ENCODE measurements at regions of chr14 and their contacts with region 1.

Region 1: GRCh38 chr14:103104654-103105452 is 10.3 kb downstream of the EXOC3L4 start:
- DNase-seq: peak; percentile 59
- H3K4me3 Mint-ChIP-seq: no peak overlapping the region
- H3K27ac Mint-ChIP-seq: no peak overlapping the region
- H3K4me1 Mint-ChIP-seq: peaks cover 8% of the 10 kb centered on the region
- H3K27me3 Mint-ChIP-seq: peaks cover 13% of the 10 kb centered on the region
- CTCF ChIP-seq: peak; percentile 94

Region 2: GRCh38 chr14:103078093-103078749 is 26.6 kb before region 1 on chr14:
- CTCF ChIA-PET with region 1: interaction called, 19 read pairs
- POLR2A ChIA-PET with region 1: interaction called, 3 read pairs
- intact Hi-C with region 1: no loop called
- DNase-seq: peak; percentile 86
- H3K4me3 Mint-ChIP-seq: no peak overlapping the region
- H3K27ac Mint-ChIP-seq: no peak overlapping the region
- H3K4me1 Mint-ChIP-seq: peaks cover 6% of the 10 kb centered on the region
- H3K27me3 Mint-ChIP-seq: no peaks in the 10 kb centered on the region
- CTCF ChIP-seq: peak; percentile 62

Region 3: GRCh38 chr14:103123634-103124500 is 19.0 kb after region 1 on chr14:
- CTCF ChIA-PET with region 1: interaction called, 50 read pairs
- POLR2A ChIA-PET with region 1: no interaction called
- intact Hi-C with region 1: no loop called
- DNase-seq: no peak
- H3K4me3 Mint-ChIP-seq: peak overlapping the region; percentile 62
- H3K27ac Mint-ChIP-seq: no peak overlapping the region
- H3K4me1 Mint-ChIP-seq: peaks cover 29% of the 10 kb centered on the region
- H3K27me3 Mint-ChIP-seq: no peaks in the 10 kb centered on the region
- CTCF ChIP-seq: peak; percentile 25

Region 4: GRCh38 chr14:103160866-103161391 is 56.1 kb after region 1 on chr14:
- CTCF ChIA-PET with region 1: interaction called, 16 read pairs
- POLR2A ChIA-PET with region 1: no interaction called
- intact Hi-C with region 1: no loop called
- DNase-seq: no peak
- H3K4me3 Mint-ChIP-seq: no peak overlapping the region
- H3K27ac Mint-ChIP-seq: no peak overlapping the region
- H3K4me1 Mint-ChIP-seq: no peaks in the 10 kb centered on the region
- H3K27me3 Mint-ChIP-seq: no peaks in the 10 kb centered on the region
- CTCF ChIP-seq: no peak

Region 5: DNA sequence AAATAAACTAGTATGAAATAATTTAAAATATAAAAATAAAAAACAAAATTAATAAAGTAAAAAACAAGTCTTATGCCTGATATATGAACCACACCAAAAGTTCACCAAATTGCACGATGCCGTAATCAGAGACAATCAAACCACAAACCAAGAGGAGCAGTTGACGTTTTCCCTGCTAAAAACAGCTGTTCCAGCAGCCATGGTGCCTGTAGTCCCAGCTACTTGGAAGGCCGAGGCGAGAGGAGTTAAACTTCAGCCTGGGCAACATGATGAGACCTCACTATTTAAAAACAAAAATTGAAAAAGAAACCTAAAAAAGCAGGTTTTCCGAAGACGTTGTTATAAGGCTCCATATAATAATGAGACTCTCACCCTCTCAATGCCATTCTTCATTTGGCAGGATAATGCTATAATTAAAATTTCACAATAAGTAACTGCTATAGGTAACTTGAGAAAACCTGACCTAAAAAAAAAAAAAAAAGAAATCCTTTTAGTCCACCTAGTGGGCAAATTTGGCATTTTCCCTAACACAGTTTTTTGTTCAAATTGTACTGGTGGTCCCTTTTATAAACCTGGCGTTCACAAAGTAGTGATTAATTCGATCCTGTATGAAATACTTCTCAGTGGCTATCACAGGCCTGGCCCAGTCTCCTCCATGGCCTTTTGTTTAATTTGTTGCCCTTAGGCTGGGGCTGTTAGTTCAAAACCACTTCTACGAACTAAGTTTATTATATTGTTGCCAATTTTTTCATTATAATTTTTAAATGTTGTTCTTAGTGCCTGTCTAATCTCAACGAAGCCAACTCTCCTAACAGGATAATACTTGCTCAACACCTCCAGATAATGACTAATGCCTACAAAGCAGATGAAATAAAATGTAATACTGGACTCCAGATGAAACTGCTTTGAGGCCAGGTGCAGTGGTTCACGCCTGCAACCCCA is 80.5 kb after region 1 on chr14:
- CTCF ChIA-PET with region 1: interaction called, 27 read pairs
- POLR2A ChIA-PET with region 1: no interaction called
- intact Hi-C with region 1: loop called (anchors 1 kb)
- DNase-seq: peak; percentile 67
- H3K4me3 Mint-ChIP-seq: no peak overlapping the region
- H3K27ac Mint-ChIP-seq: peak overlapping the region; percentile 78
- H3K4me1 Mint-ChIP-seq: peaks cover 5% of the 10 kb centered on the region
- H3K27me3 Mint-ChIP-seq: no peaks in the 10 kb centered on the region
- CTCF ChIP-seq: peak; percentile 59

Region 6: DNA sequence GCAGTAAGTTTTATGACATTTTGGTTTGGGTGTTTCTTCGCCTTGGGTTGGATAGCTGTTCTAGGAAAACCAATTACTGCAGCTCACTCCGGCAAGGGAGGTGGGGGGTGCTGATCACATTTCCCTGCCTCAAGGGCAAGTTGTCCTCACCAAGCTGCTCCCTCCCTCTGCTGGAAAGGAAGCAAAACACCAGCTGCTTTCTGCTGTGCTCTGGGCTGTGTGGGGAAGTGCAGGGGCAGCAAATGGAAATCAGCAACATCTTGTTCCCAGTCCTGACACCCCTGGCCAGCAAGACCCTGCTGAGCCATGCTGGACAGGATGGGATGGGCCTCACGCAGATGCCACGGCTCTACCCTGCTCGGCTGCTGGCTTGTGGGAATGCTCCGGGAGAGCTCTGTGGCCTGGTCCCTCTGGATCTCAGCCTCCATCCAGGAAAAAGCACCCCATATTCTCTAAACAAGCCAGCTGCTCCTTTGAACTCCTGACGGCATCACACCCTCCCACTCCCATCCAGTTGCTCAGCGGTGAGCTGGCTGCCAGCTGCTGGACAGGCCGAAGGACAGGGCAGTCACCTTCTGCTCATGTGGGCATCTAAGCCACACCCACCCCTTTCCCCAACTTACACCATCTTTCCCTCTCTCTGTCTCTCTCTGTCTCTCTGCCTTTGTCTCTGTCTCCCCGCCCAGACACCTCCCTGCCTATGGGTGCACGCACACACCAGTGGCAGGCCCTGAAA is 176.8 kb after region 1 on chr14:
- CTCF ChIA-PET with region 1: interaction called, 33 read pairs
- POLR2A ChIA-PET with region 1: interaction called, 5 read pairs
- intact Hi-C with region 1: no loop called
- DNase-seq: peak; percentile 39
- H3K4me3 Mint-ChIP-seq: no peak overlapping the region
- H3K27ac Mint-ChIP-seq: no peak overlapping the region
- H3K4me1 Mint-ChIP-seq: peaks cover 14% of the 10 kb centered on the region
- H3K27me3 Mint-ChIP-seq: no peaks in the 10 kb centered on the region
- CTCF ChIP-seq: peak; percentile 11

Region 7: GRCh38 chr14:103333754-103334643 is 229.1 kb after region 1 on chr14 and contains the start of gene EIF5:
- CTCF ChIA-PET with region 1: interaction called, 12 read pairs
- POLR2A ChIA-PET with region 1: interaction called, 19 read pairs
- intact Hi-C with region 1: no loop called
- DNase-seq: peak; percentile 98
- H3K4me3 Mint-ChIP-seq: peak within 1 kb of the TSS; percentile 89
- H3K27ac Mint-ChIP-seq: peak within 1 kb of the TSS; percentile 97
- H3K4me1 Mint-ChIP-seq: peaks cover 15% of the 10 kb centered on the region
- H3K27me3 Mint-ChIP-seq: no peaks in the 10 kb centered on the region
- CTCF ChIP-seq: peak; percentile 13
- total RNA-seq, gene EIF5: 149 and 327 TPM in 2 replicates

Measured in MCF 10A (cell line).